Activated naive CD4-positive, alpha-beta T cell treated with anti-CD3 and anti-CD28 coated beads for 36 hours (primary cell): ENCODE measurements at regions of chr3 and their contacts with region 1.

Region 1: DNA sequence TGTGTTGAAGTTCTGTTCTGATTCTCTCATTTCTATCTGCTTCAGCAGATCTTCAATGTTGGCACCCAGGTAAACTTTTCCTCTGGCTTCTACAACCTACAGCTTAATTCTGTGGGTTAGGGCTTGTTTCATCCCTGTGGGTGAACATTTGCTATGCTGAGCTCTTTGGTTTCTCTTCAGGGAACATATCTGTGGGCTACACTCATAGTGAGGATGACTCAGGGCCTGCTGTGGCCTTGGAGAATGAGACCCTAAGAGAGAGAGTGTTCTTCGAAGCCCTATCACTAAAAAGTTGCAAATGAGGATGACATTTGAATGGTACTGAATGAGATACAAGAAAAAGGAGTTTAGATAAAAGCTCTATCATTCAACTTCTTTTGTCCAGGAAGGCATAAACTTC is 346.2 kb upstream of the CBLB start:
- DNase-seq: peak; percentile 56
- H3K4me3 Mint-ChIP-seq: no peak overlapping the region
- H3K27ac Mint-ChIP-seq: peak overlapping the region; percentile 81
- H3K4me1 Mint-ChIP-seq: peaks cover 61% of the 10 kb centered on the region
- H3K27me3 Mint-ChIP-seq: no peaks in the 10 kb centered on the region

Region 2: GRCh38 chr3:106068795-106069194 is 146.3 kb before region 1 on chr3:
- CTCF ChIA-PET with region 1: no interaction called
- intact Hi-C with region 1: loop called (anchors 5 kb)
- DNase-seq: peak; percentile 26
- H3K4me3 Mint-ChIP-seq: no peak overlapping the region
- H3K27ac Mint-ChIP-seq: no peak overlapping the region
- H3K4me1 Mint-ChIP-seq: peaks cover 13% of the 10 kb centered on the region
- H3K27me3 Mint-ChIP-seq: no peaks in the 10 kb centered on the region

Region 3: GRCh38 chr3:106299300-106300098 is 84.5 kb after region 1 on chr3:
- CTCF ChIA-PET with region 1: no interaction called
- intact Hi-C with region 1: loop called (anchors 5 kb)
- DNase-seq: peak; percentile 46
- H3K4me3 Mint-ChIP-seq: no peak overlapping the region
- H3K27ac Mint-ChIP-seq: peak overlapping the region; percentile 40
- H3K4me1 Mint-ChIP-seq: peaks cover 54% of the 10 kb centered on the region
- H3K27me3 Mint-ChIP-seq: no peaks in the 10 kb centered on the region

Region 4: DNA sequence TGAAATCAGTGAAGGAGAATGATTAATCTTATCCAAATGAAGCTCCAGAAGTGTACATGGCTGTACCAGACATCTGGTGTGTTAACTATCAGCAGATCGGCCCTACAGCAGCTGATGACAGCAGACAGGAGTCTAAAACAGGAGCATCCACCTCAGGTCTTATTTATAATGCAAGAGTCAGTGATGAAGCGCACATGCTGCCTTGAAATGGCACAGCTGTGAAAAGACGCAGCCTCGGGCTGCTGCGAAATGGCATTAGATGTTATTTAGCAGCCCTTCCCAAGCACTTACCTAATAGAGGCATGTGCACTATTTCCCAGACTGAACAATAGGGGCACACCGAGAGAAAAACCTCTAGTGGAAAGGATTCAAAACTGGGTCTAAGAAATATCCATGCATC is 126.0 kb after region 1 on chr3:
- CTCF ChIA-PET with region 1: no interaction called
- intact Hi-C with region 1: no loop called
- DNase-seq: no peak
- H3K4me3 Mint-ChIP-seq: no peak overlapping the region
- H3K27ac Mint-ChIP-seq: no peak overlapping the region
- H3K4me1 Mint-ChIP-seq: peaks cover 36% of the 10 kb centered on the region
- H3K27me3 Mint-ChIP-seq: no peaks in the 10 kb centered on the region